ENCODE measurements at regions of chr9 and their contacts with region 1.

Region 1: DNA sequence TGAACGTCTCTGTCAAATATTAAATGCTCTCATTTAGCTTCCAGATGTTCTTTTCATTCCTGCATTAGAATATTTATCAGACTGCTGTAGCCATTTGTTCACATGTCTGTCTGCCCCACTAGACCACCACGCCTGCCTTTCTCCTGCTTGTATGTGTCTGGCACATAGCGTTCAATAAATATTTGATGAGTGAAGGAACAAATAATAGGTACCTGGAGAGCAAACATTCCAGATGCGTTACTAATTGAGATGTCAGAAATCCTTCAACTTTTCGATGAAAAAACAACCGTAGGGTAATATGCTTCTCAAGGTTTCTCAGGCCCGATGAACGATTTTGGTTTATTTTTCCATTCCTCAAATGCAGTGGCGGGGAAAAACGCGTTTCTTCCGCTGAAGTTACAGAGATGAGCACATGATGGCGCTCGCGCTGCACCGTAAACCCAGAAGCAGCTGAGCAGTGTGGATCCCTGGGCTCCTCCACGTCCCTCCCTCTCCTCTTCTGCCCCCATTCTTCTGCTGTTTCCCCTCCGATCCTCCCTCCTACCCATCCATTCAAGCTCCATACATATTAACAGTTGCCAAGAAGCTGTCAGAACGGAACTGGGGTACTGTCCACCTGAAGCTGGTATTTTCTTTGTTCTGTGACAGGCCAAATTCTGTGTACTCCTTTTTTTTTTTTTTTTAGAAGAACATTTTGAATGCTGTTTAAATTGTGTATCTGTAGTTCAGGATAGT is 245.4 kb downstream of the MPDZ start:
- DNase-seq: peak; percentile 75
- H3K4me3 ChIP-seq: no peak overlapping the region
- H3K27ac ChIP-seq: no peak overlapping the region
- H3K4me1 ChIP-seq: no peaks in the 10 kb centered on the region
- H3K27me3 ChIP-seq: no peaks in the 10 kb centered on the region
- CTCF ChIP-seq: peak; percentile 77 to 81
- POLR2A ChIP-seq: no peak

Region 2: GRCh38 chr9:12719431-12719830 is 314.7 kb before region 1 on chr9:
- CTCF ChIA-PET with region 1: interaction called, 26 read pairs
- POLR2A ChIA-PET with region 1: no interaction called
- dilution Hi-C with region 1: no loop called
- intact Hi-C with region 1: loop called (anchors 1 kb)
- DNase-seq: peak; percentile 39
- H3K4me3 ChIP-seq: no peak overlapping the region
- H3K27ac ChIP-seq: no peak overlapping the region
- H3K4me1 ChIP-seq: peaks cover 15% of the 10 kb centered on the region
- H3K27me3 ChIP-seq: no peaks in the 10 kb centered on the region
- CTCF ChIP-seq: peak; percentile 24
- POLR2A ChIP-seq: no peak

Region 3: GRCh38 chr9:13213337-13213736 is 179.2 kb after region 1 on chr9:
- CTCF ChIA-PET with region 1: interaction called, 4 read pairs
- POLR2A ChIA-PET with region 1: no interaction called
- dilution Hi-C with region 1: no loop called
- intact Hi-C with region 1: loop called (anchors 2 kb)
- DNase-seq: peak; percentile 44
- H3K4me3 ChIP-seq: no peak overlapping the region
- H3K27ac ChIP-seq: no peak overlapping the region
- H3K4me1 ChIP-seq: peaks cover 27% of the 10 kb centered on the region
- H3K27me3 ChIP-seq: no peaks in the 10 kb centered on the region
- CTCF ChIP-seq: peak in 1 of 2 donors; percentile 22
- POLR2A ChIP-seq: no peak

Region 4: GRCh38 chr9:13705918-13706317 is 671.8 kb after region 1 on chr9:
- CTCF ChIA-PET with region 1: no interaction called
- POLR2A ChIA-PET with region 1: no interaction called
- dilution Hi-C with region 1: no loop called
- intact Hi-C with region 1: loop called (anchors 10 kb)
- DNase-seq: peak; percentile 81
- H3K4me3 ChIP-seq: no peak overlapping the region
- H3K27ac ChIP-seq: peak overlapping the region; percentile 80
- H3K4me1 ChIP-seq: peaks cover 39% of the 10 kb centered on the region
- H3K27me3 ChIP-seq: no peaks in the 10 kb centered on the region
- CTCF ChIP-seq: no peak
- POLR2A ChIP-seq: no peak

Region 5: DNA sequence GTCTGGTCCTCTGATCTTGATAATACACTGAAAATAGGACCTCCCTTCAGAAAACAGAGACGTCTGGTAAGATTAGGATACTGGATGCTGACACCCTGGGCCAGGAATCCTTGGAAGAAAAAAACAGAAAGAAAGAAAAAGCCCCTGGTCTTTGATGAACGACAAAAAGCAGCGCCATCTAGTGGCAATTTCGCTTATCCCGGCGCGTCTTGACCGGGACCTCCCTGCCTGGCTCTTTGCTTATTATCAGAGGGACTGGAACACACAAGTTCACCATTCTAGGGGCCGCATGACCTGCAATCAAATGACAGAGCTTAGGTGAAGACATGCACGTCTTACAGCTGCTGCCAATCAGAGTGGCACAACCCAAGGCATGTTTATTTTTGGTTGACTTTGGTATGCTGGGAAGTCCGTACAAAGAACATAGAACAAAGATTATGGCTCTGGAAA is 1394.7 kb after region 1 on chr9:
- CTCF ChIA-PET with region 1: interaction called, 8 read pairs
- POLR2A ChIA-PET with region 1: no interaction called
- dilution Hi-C with region 1: no loop called
- intact Hi-C with region 1: loop called (anchors 2 kb)
- DNase-seq: peak; percentile 68
- H3K4me3 ChIP-seq: no peak overlapping the region
- H3K27ac ChIP-seq: no peak overlapping the region
- H3K4me1 ChIP-seq: peaks cover 15% of the 10 kb centered on the region
- H3K27me3 ChIP-seq: no peaks in the 10 kb centered on the region
- CTCF ChIP-seq: peak; percentile 79 to 84
- POLR2A ChIP-seq: no peak